ENCODE measurements at regions of chr1 and their contacts with region 1.

Region 1: GRCh38 chr1:117121776-117122697 is 488 bp upstream of the TRIM45 start:
- DNase-seq: peak; percentile 79
- H3K4me3 Mint-ChIP-seq: peak overlapping the region; percentile 84
- H3K27ac Mint-ChIP-seq: peak overlapping the region; percentile 46
- H3K4me1 Mint-ChIP-seq: peaks cover 7% of the 10 kb centered on the region
- H3K27me3 Mint-ChIP-seq: peaks cover 9% of the 10 kb centered on the region

Region 2: DNA sequence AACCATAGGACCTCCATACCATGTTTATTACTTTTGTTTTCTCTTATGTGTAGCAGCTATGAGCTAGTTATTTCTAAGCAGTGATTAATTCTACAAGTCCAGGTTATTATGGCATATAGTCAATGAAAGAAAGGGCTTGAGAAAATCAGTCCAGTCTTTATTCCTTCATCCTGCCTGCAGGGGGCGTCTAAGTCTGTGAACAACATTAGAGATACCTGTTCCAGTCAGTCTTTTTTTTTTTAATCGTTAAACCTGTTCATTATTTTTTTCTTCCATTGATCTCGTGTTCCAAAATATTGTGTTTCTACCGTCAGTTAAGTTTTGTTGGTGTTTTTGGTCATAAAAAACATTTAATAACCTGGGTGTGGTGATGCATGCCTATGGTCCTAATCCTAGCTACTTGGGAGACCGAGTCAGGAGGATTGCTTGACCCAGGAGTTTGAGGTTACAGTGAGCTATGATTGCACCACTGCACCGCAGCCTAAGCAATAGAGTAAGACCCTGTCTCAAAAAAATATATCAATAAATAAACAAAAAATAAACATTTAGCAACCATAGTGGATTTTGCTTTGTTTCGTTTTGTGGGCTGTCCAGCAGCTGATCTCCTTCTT is 397.2 kb before region 1 on chr1:
- intact Hi-C with region 1: loop called (anchors 5 kb)
- DNase-seq: peak; percentile 64
- H3K4me3 Mint-ChIP-seq: no peak overlapping the region
- H3K27ac Mint-ChIP-seq: no peak overlapping the region
- H3K4me1 Mint-ChIP-seq: peaks cover 43% of the 10 kb centered on the region
- H3K27me3 Mint-ChIP-seq: no peaks in the 10 kb centered on the region

Region 3: DNA sequence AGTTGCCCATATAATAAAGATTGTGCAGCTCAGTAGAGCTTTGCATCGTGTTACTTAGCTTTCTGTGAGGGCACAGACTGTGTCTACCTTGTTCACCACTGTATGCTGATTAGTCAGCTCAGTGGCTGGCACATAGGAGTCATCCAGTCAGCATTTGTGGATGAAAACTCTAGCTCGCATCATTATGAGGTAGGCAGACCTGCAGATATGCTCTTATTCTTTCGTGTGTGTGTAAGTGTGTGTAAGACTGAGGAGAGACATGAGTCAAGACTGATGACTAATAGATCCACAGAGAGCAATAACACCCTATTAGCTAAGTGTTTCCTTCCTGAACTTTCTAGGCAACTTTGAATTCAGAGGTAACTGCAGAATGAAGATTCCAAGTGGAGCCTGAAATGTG is 44.8 kb before region 1 on chr1:
- intact Hi-C with region 1: loop called (anchors 5 kb)
- DNase-seq: no peak
- H3K4me3 Mint-ChIP-seq: no peak overlapping the region
- H3K27ac Mint-ChIP-seq: peak overlapping the region; percentile 75
- H3K4me1 Mint-ChIP-seq: peaks cover 22% of the 10 kb centered on the region
- H3K27me3 Mint-ChIP-seq: no peaks in the 10 kb centered on the region

Region 4: GRCh38 chr1:117093870-117094621 is 28.0 kb before region 1 on chr1:
- intact Hi-C with region 1: loop called (anchors 2 kb)
- DNase-seq: peak; percentile 34
- H3K4me3 Mint-ChIP-seq: no peak overlapping the region
- H3K27ac Mint-ChIP-seq: peak overlapping the region; percentile 58
- H3K4me1 Mint-ChIP-seq: peaks cover 23% of the 10 kb centered on the region
- H3K27me3 Mint-ChIP-seq: no peaks in the 10 kb centered on the region

Region 5: GRCh38 chr1:117142200-117142599 is 20.2 kb after region 1 on chr1:
- intact Hi-C with region 1: no loop called
- DNase-seq: no peak
- H3K4me3 Mint-ChIP-seq: no peak overlapping the region
- H3K27ac Mint-ChIP-seq: no peak overlapping the region
- H3K4me1 Mint-ChIP-seq: no peaks in the 10 kb centered on the region
- H3K27me3 Mint-ChIP-seq: peaks cover 17% of the 10 kb centered on the region

Region 6: DNA sequence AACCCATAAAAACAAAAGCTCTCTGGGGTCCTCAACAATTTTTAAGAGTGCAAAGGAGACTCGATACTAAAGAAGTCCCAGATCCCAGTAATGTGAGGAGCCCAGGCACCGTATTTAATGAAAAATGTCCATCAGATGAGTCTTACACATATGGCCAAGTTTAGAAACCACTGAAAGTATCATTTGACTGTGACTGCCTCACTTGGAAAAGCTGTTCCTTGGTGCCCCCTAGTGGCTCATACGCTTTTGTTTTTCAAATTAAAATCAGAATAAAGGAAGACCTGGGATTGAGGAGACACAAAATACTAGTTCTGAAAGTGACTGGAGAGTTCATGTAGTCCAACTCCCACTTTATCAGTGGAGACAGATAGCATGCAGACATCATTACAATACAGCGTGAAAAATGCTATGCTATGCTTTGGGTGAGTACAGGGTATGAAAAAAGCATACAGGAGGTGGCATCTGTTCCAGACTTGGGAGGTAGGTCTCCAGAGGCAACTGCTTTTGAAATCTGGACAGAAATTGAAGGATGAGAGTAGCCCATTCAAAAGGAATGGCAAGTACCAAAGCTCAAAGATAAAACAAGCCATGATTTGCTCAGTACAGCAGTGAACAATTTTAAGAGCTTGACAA is 773.6 kb after region 1 on chr1:
- intact Hi-C with region 1: loop called (anchors 1 kb)
- DNase-seq: peak; percentile 32
- H3K4me3 Mint-ChIP-seq: no peak overlapping the region
- H3K27ac Mint-ChIP-seq: no peak overlapping the region
- H3K4me1 Mint-ChIP-seq: peaks cover 7% of the 10 kb centered on the region
- H3K27me3 Mint-ChIP-seq: no peaks in the 10 kb centered on the region